ENCODE measurements at regions of chr1 and their contacts with region 1.

Region 1: GRCh38 chr1:66242646-66243547 is 291.1 kb upstream of the SGIP1 start:
- DNase-seq: peak; percentile 82
- H3K4me3 Mint-ChIP-seq: no peak overlapping the region
- H3K27ac Mint-ChIP-seq: no peak overlapping the region
- H3K4me1 Mint-ChIP-seq: peaks cover 3% of the 10 kb centered on the region
- H3K27me3 Mint-ChIP-seq: peaks cover 6% of the 10 kb centered on the region

Region 2: GRCh38 chr1:65958561-65959350 is 284.1 kb before region 1 on chr1:
- CTCF ChIA-PET with region 1: interaction called, 95 read pairs
- POLR2A ChIA-PET with region 1: interaction called, 6 read pairs
- DNase-seq: no peak
- H3K4me3 Mint-ChIP-seq: no peak overlapping the region
- H3K27ac Mint-ChIP-seq: no peak overlapping the region
- H3K4me1 Mint-ChIP-seq: peaks cover 10% of the 10 kb centered on the region
- H3K27me3 Mint-ChIP-seq: no peaks in the 10 kb centered on the region

Region 3: GRCh38 chr1:66210635-66211244 is 32.2 kb before region 1 on chr1:
- CTCF ChIA-PET with region 1: interaction called, 10 read pairs
- POLR2A ChIA-PET with region 1: no interaction called
- DNase-seq: no peak
- H3K4me3 Mint-ChIP-seq: no peak overlapping the region
- H3K27ac Mint-ChIP-seq: no peak overlapping the region
- H3K4me1 Mint-ChIP-seq: peaks cover 10% of the 10 kb centered on the region
- H3K27me3 Mint-ChIP-seq: peaks cover 9% of the 10 kb centered on the region

Region 4: GRCh38 chr1:66271216-66271903 is 28.5 kb after region 1 on chr1:
- CTCF ChIA-PET with region 1: interaction called, 19 read pairs
- POLR2A ChIA-PET with region 1: interaction called, 27 read pairs
- DNase-seq: peak; percentile 34
- H3K4me3 Mint-ChIP-seq: no peak overlapping the region
- H3K27ac Mint-ChIP-seq: peak overlapping the region; percentile 57
- H3K4me1 Mint-ChIP-seq: peaks cover 61% of the 10 kb centered on the region
- H3K27me3 Mint-ChIP-seq: peaks cover 2% of the 10 kb centered on the region

Region 5: DNA sequence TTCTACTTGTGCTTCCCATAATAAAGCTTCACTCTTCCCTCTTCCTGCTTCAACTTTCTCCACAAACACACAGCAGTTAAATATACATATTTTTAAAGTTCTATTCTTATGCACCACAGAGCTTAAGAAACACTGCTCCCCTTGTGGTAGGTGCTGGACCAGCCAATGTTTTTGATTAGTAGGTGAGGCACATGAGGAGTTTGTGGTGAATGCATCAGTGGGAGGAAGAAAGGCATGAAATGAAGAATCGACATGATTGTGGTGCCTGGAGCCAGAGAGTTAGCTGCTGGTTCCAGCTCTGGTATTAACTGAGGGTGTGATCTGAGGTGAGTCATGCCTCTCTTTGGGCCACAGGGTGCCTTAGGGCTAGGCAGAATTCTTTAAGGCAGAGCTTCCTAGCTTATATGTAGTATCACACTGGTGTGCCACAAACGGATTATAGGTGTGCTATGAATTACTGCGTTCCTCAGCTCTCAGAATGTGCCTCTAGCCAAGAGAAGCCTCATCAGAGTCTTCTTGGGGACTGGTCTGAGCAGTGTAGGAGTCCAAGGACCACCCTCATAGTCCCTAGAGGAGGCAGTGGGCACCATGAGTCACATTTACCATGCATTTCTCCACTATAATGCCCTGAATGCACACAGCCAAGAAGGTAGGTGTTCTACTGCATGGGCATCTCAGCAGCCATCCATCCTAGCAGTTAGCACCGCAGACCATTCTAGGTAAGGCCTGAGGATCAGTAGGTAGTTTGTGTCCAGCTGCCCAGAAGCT is 193.7 kb after region 1 on chr1:
- CTCF ChIA-PET with region 1: interaction called, 422 read pairs
- POLR2A ChIA-PET with region 1: interaction called, 19 read pairs
- DNase-seq: peak; percentile 62
- H3K4me3 Mint-ChIP-seq: no peak overlapping the region
- H3K27ac Mint-ChIP-seq: peak overlapping the region; percentile 57
- H3K4me1 Mint-ChIP-seq: peaks cover 44% of the 10 kb centered on the region
- H3K27me3 Mint-ChIP-seq: no peaks in the 10 kb centered on the region